ENCODE measurements at regions of chr4 and their contacts with region 1.

Region 1: DNA sequence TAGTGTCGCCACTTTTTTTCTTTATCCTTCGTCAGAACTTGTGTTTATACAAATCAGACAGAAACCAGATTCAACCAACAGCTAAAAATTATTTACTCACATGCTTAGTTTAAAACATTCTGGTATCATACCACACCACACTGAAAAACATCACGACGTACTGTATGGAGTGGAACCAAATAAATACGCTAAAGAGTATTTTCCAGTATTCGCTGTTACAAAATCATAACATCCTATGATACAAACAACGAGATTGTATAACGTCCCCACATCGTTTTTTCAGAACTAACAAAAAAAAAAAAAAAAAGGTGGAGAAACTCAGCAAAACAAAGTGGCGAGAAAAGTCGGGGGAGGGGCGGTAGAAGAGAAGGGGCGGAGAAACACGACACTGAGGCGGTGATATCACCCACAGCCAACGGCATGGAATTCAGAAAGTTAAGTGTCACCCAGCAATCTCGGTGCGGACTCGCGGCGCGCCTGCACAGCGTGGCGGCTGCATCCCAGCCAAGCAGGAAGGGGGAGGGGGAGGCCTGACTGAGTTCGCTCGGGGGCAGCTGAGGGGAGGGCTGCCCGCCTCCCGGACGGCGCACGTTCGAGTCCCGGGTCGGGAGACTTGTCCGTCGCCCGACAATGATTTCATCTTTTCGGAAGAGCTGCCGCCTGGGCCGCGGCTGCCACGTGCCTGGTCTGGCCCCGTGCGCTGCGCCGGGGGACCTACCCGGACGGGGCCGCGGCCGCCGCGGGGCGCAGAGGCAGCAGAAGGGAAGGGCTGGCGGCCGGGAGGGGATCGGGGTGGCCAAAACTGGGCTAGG is 920 bp downstream of the SETD7 start:
- DNase-seq: peak; percentile 77
- ATAC-seq: peak; percentile 54
- H3K4me3 ChIP-seq: peak overlapping the region; percentile 70
- H3K27ac ChIP-seq: peak overlapping the region; percentile 44; the same call in 1 of the 2 replicates
- H3K4me1 ChIP-seq: peaks cover 12% of the 10 kb centered on the region
- H3K27me3 ChIP-seq: no peaks in the 10 kb centered on the region
- CTCF ChIP-seq: no peak

Region 2: DNA sequence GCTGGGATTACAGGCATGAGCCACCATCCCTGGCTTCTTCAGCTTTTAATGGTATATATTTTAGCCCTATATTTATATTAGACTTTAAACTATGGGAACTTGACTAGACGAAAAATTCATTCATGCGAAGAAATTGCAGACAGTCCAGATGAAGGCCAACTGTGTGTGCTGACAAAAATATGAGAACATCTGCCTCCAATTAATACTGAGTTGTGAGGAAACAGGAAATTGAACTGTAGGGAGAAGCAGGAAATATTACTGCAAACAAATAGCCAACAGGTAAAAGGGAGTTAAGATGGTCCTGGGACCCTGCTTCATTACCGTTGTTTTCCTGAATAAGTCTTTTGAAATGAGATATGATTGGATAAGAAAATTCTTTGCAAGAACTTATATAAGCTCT is 301.4 kb before region 1 on chr4:
- CTCF ChIA-PET with region 1: no interaction called
- POLR2A ChIA-PET with region 1: no interaction called
- intact Hi-C with region 1: no loop called
- DNase-seq: no peak
- ATAC-seq: no peak
- H3K4me3 ChIP-seq: no peak overlapping the region
- H3K27ac ChIP-seq: no peak overlapping the region
- H3K4me1 ChIP-seq: no peaks in the 10 kb centered on the region
- H3K27me3 ChIP-seq: no peaks in the 10 kb centered on the region
- CTCF ChIP-seq: no peak

Region 3: DNA sequence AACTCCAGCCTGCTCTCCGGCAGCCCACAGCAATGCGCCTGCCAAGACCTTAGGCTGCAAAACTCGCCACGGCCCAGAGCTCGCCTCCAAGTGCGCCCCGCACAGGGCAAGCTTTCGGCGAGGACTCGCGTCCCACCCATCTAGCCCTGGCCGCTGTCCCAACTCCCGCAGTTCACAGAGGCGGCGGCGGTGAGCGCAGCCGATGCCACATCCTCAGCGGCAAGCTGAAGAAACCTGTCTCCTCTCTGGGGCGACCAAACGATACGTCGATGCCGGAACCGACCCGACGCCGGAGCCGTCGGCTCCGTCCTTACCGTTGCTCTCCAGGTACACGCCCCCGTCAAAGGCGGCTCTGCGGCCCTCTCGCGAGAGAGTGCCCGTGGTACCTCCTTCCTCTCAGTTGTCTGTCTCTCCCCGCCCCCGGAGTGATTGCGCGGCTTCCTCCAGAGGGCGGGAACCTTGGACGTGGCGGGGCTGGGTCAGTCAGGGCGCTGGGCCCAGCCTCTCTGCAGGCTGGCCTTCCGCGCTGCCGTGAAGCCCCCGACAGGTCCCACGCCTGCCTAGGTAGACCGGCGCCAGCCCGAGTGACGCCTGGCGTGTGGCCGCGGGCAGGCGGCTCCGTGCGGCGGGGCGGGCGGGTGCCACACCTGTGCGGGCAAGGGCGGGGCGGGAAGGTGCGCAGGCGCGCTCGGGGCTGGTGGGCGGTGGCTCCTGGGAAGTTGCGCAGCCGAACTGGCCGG is 101.6 kb before region 1 on chr4:
- CTCF ChIA-PET with region 1: no interaction called
- POLR2A ChIA-PET with region 1: no interaction called
- intact Hi-C with region 1: loop called (anchors 5 kb)
- DNase-seq: peak; percentile 93
- ATAC-seq: peak; percentile 89
- H3K4me3 ChIP-seq: peak overlapping the region; percentile 99
- H3K27ac ChIP-seq: peak overlapping the region; percentile 90
- H3K4me1 ChIP-seq: peaks cover 39% of the 10 kb centered on the region
- H3K27me3 ChIP-seq: no peaks in the 10 kb centered on the region
- CTCF ChIP-seq: peak; percentile 41

Region 4: GRCh38 chr4:139499026-139499585 is 56.0 kb before region 1 on chr4:
- CTCF ChIA-PET with region 1: interaction called, 3 read pairs
- POLR2A ChIA-PET with region 1: no interaction called
- intact Hi-C with region 1: loop called (anchors 2 kb)
- DNase-seq: no peak
- ATAC-seq: no peak
- H3K4me3 ChIP-seq: no peak overlapping the region
- H3K27ac ChIP-seq: no peak overlapping the region
- H3K4me1 ChIP-seq: no peaks in the 10 kb centered on the region
- H3K27me3 ChIP-seq: no peaks in the 10 kb centered on the region
- CTCF ChIP-seq: no peak

Region 5: GRCh38 chr4:139509727-139510410 is 45.2 kb before region 1 on chr4:
- CTCF ChIA-PET with region 1: no interaction called
- POLR2A ChIA-PET with region 1: no interaction called
- intact Hi-C with region 1: no loop called
- DNase-seq: no peak
- ATAC-seq: no peak; the same call in 1 of the 2 replicates
- H3K4me3 ChIP-seq: no peak overlapping the region
- H3K27ac ChIP-seq: no peak overlapping the region
- H3K4me1 ChIP-seq: no peaks in the 10 kb centered on the region
- H3K27me3 ChIP-seq: no peaks in the 10 kb centered on the region
- CTCF ChIP-seq: peak; percentile 39; the same call in 1 of the 2 replicates

Region 6: GRCh38 chr4:139522457-139522856 is 32.6 kb before region 1 on chr4:
- CTCF ChIA-PET with region 1: no interaction called
- POLR2A ChIA-PET with region 1: no interaction called
- intact Hi-C with region 1: no loop called
- DNase-seq: no peak
- ATAC-seq: no peak
- H3K4me3 ChIP-seq: no peak overlapping the region
- H3K27ac ChIP-seq: no peak overlapping the region
- H3K4me1 ChIP-seq: peaks cover 22% of the 10 kb centered on the region
- H3K27me3 ChIP-seq: no peaks in the 10 kb centered on the region
- CTCF ChIP-seq: no peak

Region 7: GRCh38 chr4:139596024-139596679 is 41.1 kb after region 1 on chr4:
- CTCF ChIA-PET with region 1: no interaction called
- POLR2A ChIA-PET with region 1: no interaction called
- intact Hi-C with region 1: loop called (anchors 2 kb)
- DNase-seq: peak; percentile 85
- ATAC-seq: peak; percentile 61
- H3K4me3 ChIP-seq: peak overlapping the region; percentile 41; the same call in 1 of the 2 replicates
- H3K27ac ChIP-seq: peak overlapping the region; percentile 85
- H3K4me1 ChIP-seq: peaks cover 57% of the 10 kb centered on the region
- H3K27me3 ChIP-seq: no peaks in the 10 kb centered on the region
- CTCF ChIP-seq: no peak

Region 8: GRCh38 chr4:139682741-139683151 is 127.6 kb after region 1 on chr4:
- CTCF ChIA-PET with region 1: no interaction called
- POLR2A ChIA-PET with region 1: no interaction called
- intact Hi-C with region 1: no loop called
- DNase-seq: no peak
- ATAC-seq: no peak
- H3K4me3 ChIP-seq: no peak overlapping the region
- H3K27ac ChIP-seq: no peak overlapping the region
- H3K4me1 ChIP-seq: no peaks in the 10 kb centered on the region
- H3K27me3 ChIP-seq: no peaks in the 10 kb centered on the region
- CTCF ChIP-seq: no peak

Region 9: DNA sequence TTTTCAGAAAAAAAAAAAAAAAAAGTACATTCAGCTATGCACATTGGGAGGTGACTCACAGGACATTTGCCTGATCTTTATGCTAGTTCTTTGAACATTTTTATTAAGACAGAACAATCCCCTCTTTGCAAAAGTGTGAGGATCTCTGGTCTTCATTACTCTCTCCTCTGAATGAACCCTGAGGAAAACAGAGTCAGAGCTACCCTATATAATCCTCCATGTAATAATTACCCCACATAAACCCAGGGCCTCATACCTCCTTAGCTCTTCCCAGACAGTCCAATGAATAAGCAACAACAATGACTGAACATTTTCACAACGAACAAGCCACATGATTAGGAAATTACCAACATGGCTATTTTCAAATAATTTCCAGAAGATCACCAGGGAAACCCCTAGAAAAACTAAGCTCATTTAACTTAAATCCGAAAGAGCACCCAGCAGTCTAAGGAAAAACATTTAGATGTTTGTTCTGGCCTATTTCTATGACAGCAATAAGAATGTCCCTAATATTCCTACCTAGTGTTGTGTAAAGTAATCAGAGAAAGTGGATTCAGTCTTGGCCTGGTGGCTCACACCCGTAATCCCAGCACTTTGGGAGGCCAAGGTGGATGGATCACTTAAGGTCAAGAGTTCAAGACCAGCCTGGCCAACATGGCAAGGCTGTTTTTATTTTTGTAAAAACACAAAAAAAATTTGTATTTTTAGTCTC is 1163.3 kb after region 1 on chr4:
- CTCF ChIA-PET with region 1: no interaction called
- POLR2A ChIA-PET with region 1: interaction called, 11 read pairs
- intact Hi-C with region 1: no loop called
- DNase-seq: no peak
- ATAC-seq: 0 out of 2 replicates have a peak, but pooled peaks have one; percentile 24
- H3K4me3 ChIP-seq: no peak overlapping the region
- H3K27ac ChIP-seq: 0 out of 2 replicates have a peak overlapping the region, but pooled peaks have one; percentile 1
- H3K4me1 ChIP-seq: peaks cover 12% of the 10 kb centered on the region
- H3K27me3 ChIP-seq: no peaks in the 10 kb centered on the region
- CTCF ChIP-seq: no peak

Measured in PC-3 (cell line).